Naive thymus-derived CD4-positive, alpha-beta T cell (primary cell): ENCODE measurements at regions of chr21 and their contacts with region 1.

Region 1: DNA sequence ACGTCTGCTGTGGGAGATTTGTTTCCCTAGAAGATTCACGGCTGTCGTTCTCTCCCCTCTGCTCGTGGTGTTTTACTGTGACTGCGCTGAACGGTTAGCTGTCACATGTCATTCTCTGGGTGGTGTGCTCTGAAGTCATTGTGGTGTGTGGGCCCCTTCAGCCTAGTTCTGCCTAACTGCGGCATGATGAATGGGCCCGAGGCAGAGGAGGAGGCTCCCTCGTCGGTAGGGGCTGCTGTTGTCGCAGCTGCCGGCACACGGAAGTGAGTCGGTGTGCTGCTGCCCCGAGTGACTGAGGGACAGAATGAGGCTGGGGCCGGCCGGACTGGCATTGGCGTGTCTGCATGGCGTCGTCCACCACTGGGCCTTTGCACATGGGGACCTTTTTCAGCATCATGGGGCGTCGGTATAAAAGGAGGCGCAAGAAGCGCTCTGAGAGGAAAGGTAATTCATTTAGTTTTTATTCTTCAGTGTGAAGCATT is 77.9 kb downstream of the ADARB1 start:
- DNase-seq: peak; percentile 47 to 75 (median 72)
- ATAC-seq: peak; percentile 95
- H3K4me3 ChIP-seq: no peak overlapping the region
- H3K4me3 Mint-ChIP-seq: peak overlapping the region; percentile 22 to 81 (median 72)
- H3K27ac ChIP-seq: peak overlapping the region; percentile 50
- H3K27ac Mint-ChIP-seq: peak overlapping the region; percentile 72 to 94 (median 85)
- H3K4me1 ChIP-seq: peaks cover 16 to 30% of the 10 kb centered on the region in 2 donors
- H3K4me1 Mint-ChIP-seq: peaks cover 23 to 55% (median 43%) of the 10 kb centered on the region in 7 donors
- H3K27me3 ChIP-seq: no peaks in the 10 kb centered on the region
- H3K27me3 Mint-ChIP-seq: no peaks in the 10 kb centered on the region

Region 2: GRCh38 chr21:45167796-45168222 is 15.5 kb after region 1 on chr21:
- CTCF ChIA-PET with region 1: no interaction called
- POLR2A ChIA-PET with region 1: interaction called, 3 read pairs
- intact Hi-C with region 1: loop called in 1 of 2 experiments (anchors 1 kb)
- DNase-seq: no peak
- ATAC-seq: no peak
- H3K4me3 ChIP-seq: no peak overlapping the region
- H3K4me3 Mint-ChIP-seq: no peak overlapping the region
- H3K27ac ChIP-seq: no peak overlapping the region
- H3K27ac Mint-ChIP-seq: no peak overlapping the region
- H3K4me1 ChIP-seq: peaks cover 3 to 8% of the 10 kb centered on the region in 2 donors
- H3K4me1 Mint-ChIP-seq: peaks cover 19 to 50% (median 34%) of the 10 kb centered on the region in 7 donors
- H3K27me3 ChIP-seq: no peaks in the 10 kb centered on the region
- H3K27me3 Mint-ChIP-seq: no peaks in the 10 kb centered on the region

Region 3: DNA sequence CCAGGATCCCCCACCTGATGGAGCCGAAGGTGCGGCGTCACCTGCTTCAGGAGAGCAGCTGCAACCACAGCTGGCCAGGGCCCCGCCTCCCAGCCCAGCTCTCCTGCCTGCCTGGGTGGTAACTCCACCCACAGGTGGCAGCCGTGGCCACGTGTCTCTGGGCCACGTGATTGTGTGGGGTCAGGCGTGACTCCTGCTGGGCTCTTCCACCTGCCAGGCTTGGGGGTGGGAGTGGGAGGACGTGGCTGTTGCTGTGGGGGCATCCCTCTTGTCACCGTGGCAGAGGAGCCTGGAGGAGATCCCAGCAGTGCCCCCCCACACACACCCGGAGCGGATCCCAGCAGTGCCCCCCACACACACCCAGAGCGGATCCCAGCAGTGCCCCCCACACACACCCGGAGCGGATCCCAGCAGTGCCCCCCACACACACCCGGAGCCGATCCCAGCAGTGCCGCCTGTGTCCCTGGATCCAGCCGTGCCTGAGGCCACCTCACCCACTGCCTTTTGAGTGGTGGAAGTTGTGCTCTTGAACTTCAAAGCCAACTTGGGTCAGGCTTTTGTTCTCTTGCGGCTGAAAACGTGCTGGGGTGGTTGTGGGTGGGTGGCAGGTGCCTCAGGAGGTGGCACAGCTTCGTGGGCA is 103.2 kb after region 1 on chr21:
- CTCF ChIA-PET with region 1: no interaction called
- POLR2A ChIA-PET with region 1: no interaction called
- intact Hi-C with region 1: loop called in 1 of 2 experiments (anchors 10 kb)
- DNase-seq: peak in 1 of 9 donors; percentile 31
- ATAC-seq: peak; percentile 67
- H3K4me3 ChIP-seq: no peak overlapping the region
- H3K4me3 Mint-ChIP-seq: peak overlapping the region in 5 of 10 donors; percentile 4 to 67 (median 33)
- H3K27ac ChIP-seq: no peak overlapping the region
- H3K27ac Mint-ChIP-seq: peak overlapping the region in 1 of 9 donors; percentile 43
- H3K4me1 ChIP-seq: peaks cover 0 to 5% of the 10 kb centered on the region in 2 donors
- H3K4me1 Mint-ChIP-seq: peaks cover 0 to 18% (median 9%) of the 10 kb centered on the region in 7 donors
- H3K27me3 ChIP-seq: peaks cover 0 to 5% of the 10 kb centered on the region in 2 donors
- H3K27me3 Mint-ChIP-seq: peaks cover 5 to 16% (median 13%) of the 10 kb centered on the region in 5 donors

Region 4: DNA sequence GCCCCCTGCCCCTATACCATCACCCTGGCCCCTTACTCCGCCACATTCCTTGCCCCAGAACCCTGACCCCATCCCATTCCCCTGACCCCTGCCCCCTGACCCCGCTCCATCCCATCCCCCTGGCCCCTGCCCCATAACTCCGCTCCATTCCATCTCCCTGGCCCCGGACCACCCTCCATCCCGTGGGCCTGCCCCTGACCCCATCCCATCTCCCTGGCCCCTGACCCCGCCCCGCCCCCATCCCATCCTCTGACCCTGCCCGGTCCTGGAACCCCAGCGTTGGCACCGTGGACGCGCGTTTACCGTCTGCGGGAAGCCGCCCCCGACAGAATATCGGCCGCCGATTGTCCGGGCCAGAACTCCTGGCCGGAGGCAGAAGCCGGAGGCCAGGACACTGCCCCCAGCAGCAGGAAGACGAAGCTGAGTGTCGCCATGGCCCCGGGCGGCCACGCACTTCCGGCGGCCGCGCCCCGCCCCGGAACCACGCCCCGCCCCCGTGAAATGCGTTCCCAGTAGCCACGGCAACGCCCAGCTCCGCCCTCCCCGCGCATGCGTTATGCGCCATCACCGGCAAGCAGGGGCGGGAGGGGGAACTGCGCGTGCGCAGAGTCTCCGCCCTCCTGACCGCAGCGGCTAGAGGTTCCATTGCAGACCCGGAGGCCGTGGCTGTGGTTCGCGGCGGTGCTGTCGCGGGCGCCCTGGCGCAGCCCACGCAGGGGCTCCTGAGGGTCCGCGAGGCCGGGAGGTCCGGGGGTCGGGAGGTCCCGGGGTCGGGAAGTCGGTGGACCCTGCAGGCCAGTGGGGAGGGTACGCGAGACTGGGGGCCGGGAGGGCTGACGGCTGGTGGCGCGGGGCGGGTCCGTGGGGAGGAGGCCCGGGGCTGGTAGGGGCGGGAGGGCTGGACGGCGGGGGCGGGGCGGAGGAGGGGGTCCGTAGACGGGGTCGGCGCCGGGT is 135.4 kb after region 1 on chr21 and contains the start of gene POFUT2:
- CTCF ChIA-PET with region 1: interaction called, 3 read pairs
- POLR2A ChIA-PET with region 1: no interaction called
- intact Hi-C with region 1: loop called (anchors 1 to 2 kb)
- DNase-seq: peak; percentile 95 to 100 (median 98)
- ATAC-seq: peak; percentile 91
- H3K4me3 ChIP-seq: peak within 1 kb of the TSS; percentile 68
- H3K4me3 Mint-ChIP-seq: peak within 1 kb of the TSS; percentile 68 to 88 (median 87)
- H3K27ac ChIP-seq: peak within 1 kb of the TSS; percentile 97
- H3K27ac Mint-ChIP-seq: peak within 1 kb of the TSS; percentile 72 to 93 (median 87)
- H3K4me1 ChIP-seq: peaks cover 7 to 16% of the 10 kb centered on the region in 2 donors
- H3K4me1 Mint-ChIP-seq: peaks cover 11 to 46% (median 30%) of the 10 kb centered on the region in 7 donors
- H3K27me3 ChIP-seq: no peaks in the 10 kb centered on the region
- H3K27me3 Mint-ChIP-seq: peaks cover 0 to 10% (median 0%) of the 10 kb centered on the region in 5 donors
- total RNA-seq, gene POFUT2: 20.1 to 53.3 (median 47.8) TPM